H1 (cell line): ENCODE measurements at regions of chr15 and their contacts with region 1.

Region 1: DNA sequence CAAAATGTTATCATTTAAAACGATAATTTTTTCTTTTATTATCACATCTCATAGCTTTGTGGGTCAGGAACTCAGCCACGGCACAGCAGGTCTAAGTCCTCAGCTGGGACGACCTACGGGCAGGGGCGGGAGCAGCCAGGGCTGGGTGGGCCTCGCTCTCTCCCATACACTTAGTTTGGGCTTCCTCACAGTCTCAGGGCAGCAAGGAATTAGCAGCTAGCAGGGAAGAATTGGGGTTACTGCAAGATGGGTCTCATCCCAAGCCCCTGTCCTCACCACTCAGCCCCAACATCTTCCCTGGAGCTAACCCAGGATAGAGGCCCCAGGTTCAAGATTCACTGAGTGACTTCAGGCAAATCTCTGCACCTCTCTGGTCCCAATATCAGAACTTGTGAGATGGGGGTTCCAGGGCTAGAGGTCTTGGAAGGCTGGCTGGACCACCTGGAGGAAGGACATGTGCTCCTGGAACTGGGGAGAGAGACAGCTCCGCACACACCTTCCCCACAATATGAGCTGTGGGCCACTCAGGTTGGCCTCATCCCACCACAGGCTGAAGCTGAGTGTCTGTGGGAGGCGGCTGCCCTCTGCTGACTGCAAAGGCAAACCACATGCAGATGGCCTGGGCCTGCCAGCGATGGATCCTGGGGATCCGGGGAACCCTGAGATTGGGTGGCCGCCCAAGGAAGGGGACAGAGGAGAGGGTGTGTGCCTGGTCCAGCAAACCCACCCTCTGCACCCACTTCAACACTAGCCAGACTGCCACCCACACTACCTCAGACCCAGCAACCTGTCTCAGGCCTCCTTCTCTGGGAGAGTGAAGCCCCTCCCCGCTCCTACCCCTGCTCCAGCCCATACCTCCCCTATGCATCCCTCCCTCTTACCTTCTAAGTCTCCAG is 45.0 kb downstream of the CYP11A1 start:
- DNase-seq: peak in 1 of 2 experiments; percentile 88
- H3K4me3 ChIP-seq: no peak overlapping the region
- H3K27ac ChIP-seq: no peak overlapping the region
- H3K4me1 ChIP-seq: peaks cover 3 to 25% (median 19%) of the 10 kb centered on the region in 4 experiments
- H3K27me3 ChIP-seq: no peaks in the 10 kb centered on the region
- CTCF ChIP-seq: peak; percentile 96 to 99 (median 97)
- EP300 ChIP-seq: no peak
- POLR2A ChIP-seq: no peak
- RAD21 ChIP-seq: peak; percentile 99

Region 2: GRCh38 chr15:74044267-74045110 is 277.9 kb before region 1 on chr15:
- CTCF ChIA-PET with region 1: interaction called, 38 read pairs
- POLR2A ChIA-PET with region 1: no interaction called
- DNase-seq: no peak
- H3K4me3 ChIP-seq: no peak overlapping the region
- H3K27ac ChIP-seq: no peak overlapping the region
- H3K4me1 ChIP-seq: peaks cover 0 to 5% (median 3%) of the 10 kb centered on the region in 4 experiments; a peak in 5 of 7 replicates
- H3K27me3 ChIP-seq: peaks cover 0 to under 1% (median 0%) of the 10 kb centered on the region in 4 experiments; a peak in 1 of 7 replicates
- CTCF ChIP-seq: no peak
- EP300 ChIP-seq: no peak
- POLR2A ChIP-seq: no peak
- RAD21 ChIP-seq: no peak

Region 3: GRCh38 chr15:74062671-74063070 is 259.8 kb before region 1 on chr15:
- CTCF ChIA-PET with region 1: interaction called, 12 read pairs
- POLR2A ChIA-PET with region 1: no interaction called
- DNase-seq: no peak
- H3K4me3 ChIP-seq: no peak overlapping the region
- H3K27ac ChIP-seq: no peak overlapping the region
- H3K4me1 ChIP-seq: no peaks in the 10 kb centered on the region
- H3K27me3 ChIP-seq: no peaks in the 10 kb centered on the region
- CTCF ChIP-seq: no peak
- EP300 ChIP-seq: no peak
- POLR2A ChIP-seq: no peak
- RAD21 ChIP-seq: no peak

Region 4: GRCh38 chr15:74134387-74135027 is 187.9 kb before region 1 on chr15:
- CTCF ChIA-PET with region 1: interaction called, 62 read pairs
- POLR2A ChIA-PET with region 1: interaction called, 6 read pairs
- DNase-seq: peak in 1 of 2 experiments; percentile 89
- H3K4me3 ChIP-seq: peak overlapping the region in 3 of 4 experiments; percentile 20 to 62 (median 36); a peak in 6 of 8 replicates
- H3K27ac ChIP-seq: no peak overlapping the region
- H3K4me1 ChIP-seq: peaks cover 0 to 69% (median 57%) of the 10 kb centered on the region in 4 experiments; a peak in 6 of 7 replicates
- H3K27me3 ChIP-seq: peaks cover 72 to 96% (median 91%) of the 10 kb centered on the region in 4 experiments
- CTCF ChIP-seq: peak in 2 of 3 experiments; percentile 65 to 71; a peak in 3 of 4 replicates
- EP300 ChIP-seq: no peak
- POLR2A ChIP-seq: no peak
- RAD21 ChIP-seq: peak; percentile 48 to 58

Region 5: DNA sequence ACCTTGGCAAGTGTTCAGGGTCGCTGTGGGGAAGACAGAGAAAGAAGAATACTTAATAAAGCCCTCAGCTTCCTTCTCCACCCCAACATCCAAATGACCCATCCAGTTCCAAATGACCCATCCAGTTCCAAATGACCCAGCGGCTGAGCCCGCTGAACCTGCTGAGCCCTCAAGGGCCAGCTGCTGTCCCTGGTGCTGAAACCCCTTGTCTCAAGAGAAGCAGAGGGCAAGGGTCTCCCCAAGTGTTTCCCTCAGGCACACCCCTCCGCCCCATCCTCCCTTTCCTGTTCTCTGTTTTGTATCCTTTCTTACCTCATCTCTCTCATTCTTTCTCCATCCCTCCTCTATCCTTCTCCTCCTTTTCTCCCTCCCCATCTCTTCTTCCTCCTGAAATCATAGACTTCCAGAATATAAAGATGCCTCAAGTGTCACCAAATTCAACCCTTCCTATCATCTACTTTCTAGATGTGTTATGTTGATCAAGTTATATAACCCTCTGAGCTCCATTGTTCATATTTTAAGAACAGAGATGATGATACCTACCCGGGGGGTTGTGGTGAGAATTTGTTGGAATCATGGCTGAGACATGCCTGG is 57.3 kb before region 1 on chr15:
- CTCF ChIA-PET with region 1: interaction called, 25 read pairs
- POLR2A ChIA-PET with region 1: no interaction called
- DNase-seq: peak; percentile 27 to 87
- H3K4me3 ChIP-seq: no peak overlapping the region
- H3K27ac ChIP-seq: no peak overlapping the region
- H3K4me1 ChIP-seq: peaks cover 7 to 15% (median 9%) of the 10 kb centered on the region in 4 experiments
- H3K27me3 ChIP-seq: peaks cover 0 to 8% (median 0%) of the 10 kb centered on the region in 4 experiments; a peak in 1 of 7 replicates
- CTCF ChIP-seq: no peak
- EP300 ChIP-seq: no peak
- POLR2A ChIP-seq: no peak
- RAD21 ChIP-seq: peak in 1 of 2 experiments; percentile 9; a peak in 1 of 4 replicates

Region 6: GRCh38 chr15:74302821-74303359 is 19.5 kb before region 1 on chr15:
- CTCF ChIA-PET with region 1: interaction called, 353 read pairs
- POLR2A ChIA-PET with region 1: interaction called, 19 read pairs
- DNase-seq: peak; percentile 47 to 87
- H3K4me3 ChIP-seq: no peak overlapping the region
- H3K27ac ChIP-seq: no peak overlapping the region
- H3K4me1 ChIP-seq: peaks cover 11 to 49% (median 29%) of the 10 kb centered on the region in 4 experiments
- H3K27me3 ChIP-seq: peaks cover 2 to 31% (median 25%) of the 10 kb centered on the region in 4 experiments; a peak in 6 of 7 replicates
- CTCF ChIP-seq: peak; percentile 81 to 92 (median 85)
- EP300 ChIP-seq: no peak
- POLR2A ChIP-seq: no peak
- RAD21 ChIP-seq: peak; percentile 80 to 89

Region 7: GRCh38 chr15:74799856-74800547 is 477.6 kb after region 1 on chr15:
- CTCF ChIA-PET with region 1: no interaction called
- POLR2A ChIA-PET with region 1: no interaction called
- DNase-seq: peak; percentile 34 to 96
- H3K4me3 ChIP-seq: no peak overlapping the region
- H3K27ac ChIP-seq: no peak overlapping the region
- H3K4me1 ChIP-seq: peaks cover 0 to 5% (median 2%) of the 10 kb centered on the region in 4 experiments; a peak in 3 of 7 replicates
- H3K27me3 ChIP-seq: no peaks in the 10 kb centered on the region
- CTCF ChIP-seq: peak; percentile 96 to 99 (median 99)
- EP300 ChIP-seq: peak in 1 of 2 experiments; percentile 23; a peak in 1 of 3 replicates
- POLR2A ChIP-seq: no peak
- RAD21 ChIP-seq: peak; percentile 88 to 91